A673 (cell line): ENCODE measurements at regions of chr2 and their contacts with region 1.

Region 1: DNA sequence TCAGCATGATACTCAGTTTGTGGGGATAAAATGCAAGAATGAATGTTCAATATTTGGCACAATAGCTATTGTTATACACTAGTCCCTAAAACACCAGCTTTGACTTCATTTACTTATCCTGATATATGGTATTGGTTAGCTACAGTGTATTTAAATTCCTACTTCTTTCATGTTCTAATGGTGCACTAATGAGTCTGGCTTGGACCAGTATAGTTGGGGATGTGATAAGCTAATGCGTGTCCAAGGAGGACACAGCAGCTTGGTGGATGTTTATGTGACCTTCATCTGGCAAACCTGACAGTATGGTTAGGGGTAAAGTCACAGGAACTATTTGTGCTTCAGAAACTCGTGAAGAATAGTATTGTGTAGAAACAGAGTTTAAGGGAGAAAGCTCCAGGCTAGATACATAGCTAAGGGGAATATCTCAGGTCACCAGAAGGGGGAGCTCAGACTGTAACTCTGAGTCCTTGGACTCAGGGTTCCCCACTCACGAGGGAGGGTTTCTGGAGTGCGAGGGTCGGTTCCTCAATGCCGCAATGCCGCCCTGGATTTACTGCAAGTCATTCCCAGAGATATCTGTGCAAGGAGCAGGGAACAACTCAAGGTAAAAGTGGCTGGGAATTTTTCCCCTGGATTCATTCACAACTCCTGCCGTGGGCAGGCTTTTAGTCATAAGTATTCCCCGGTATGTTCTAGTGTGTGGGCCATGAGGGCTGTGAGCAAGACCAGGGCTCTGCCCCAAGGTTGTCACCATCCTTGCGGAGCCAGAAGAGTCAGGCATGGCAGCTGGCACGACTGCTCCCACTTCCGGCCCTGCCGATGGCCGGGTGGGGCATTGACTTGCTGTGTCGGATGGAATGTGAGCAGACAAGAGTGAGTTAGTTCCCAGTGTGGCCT is 14.5 kb downstream of the IL1R2 start:
- DNase-seq: peak; percentile 62
- H3K4me3 ChIP-seq: no peak overlapping the region
- H3K27ac ChIP-seq: no peak overlapping the region
- H3K4me1 ChIP-seq: no peaks in the 10 kb centered on the region
- H3K27me3 ChIP-seq: no peaks in the 10 kb centered on the region
- CTCF ChIP-seq: peak; percentile 74

Region 2: DNA sequence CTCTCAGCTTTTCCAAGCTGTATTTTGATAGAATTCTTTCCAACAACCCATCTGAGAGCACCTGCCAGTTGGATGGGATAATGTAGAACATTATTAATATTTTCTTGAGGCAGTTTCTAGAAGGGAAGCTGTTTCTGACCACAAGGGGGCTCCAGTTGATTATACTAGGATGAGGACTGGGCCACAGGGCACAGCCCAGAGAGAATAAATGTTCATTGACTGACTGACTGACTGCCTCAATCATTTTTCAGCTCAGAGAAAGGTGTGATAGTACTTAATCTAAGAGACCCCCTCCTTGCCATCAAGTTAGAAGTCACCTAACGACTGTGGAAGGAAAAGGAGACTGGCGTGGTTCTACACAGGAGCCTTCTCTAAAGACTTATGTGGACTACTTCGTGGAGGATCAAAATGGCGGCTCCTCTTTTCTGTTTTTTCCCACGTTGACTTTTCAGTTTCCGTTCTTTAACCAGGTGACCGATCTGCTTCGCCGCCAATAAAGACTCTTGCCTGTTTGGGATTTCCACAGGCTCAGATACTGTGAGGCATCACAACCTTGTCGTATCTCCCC is 587.1 kb before region 1 on chr2:
- CTCF ChIA-PET with region 1: no interaction called
- POLR2A ChIA-PET with region 1: no interaction called
- intact Hi-C with region 1: loop called (anchors 10 kb)
- DNase-seq: peak; percentile 73
- H3K4me3 ChIP-seq: no peak overlapping the region
- H3K27ac ChIP-seq: no peak overlapping the region
- H3K4me1 ChIP-seq: no peaks in the 10 kb centered on the region
- H3K27me3 ChIP-seq: no peaks in the 10 kb centered on the region
- CTCF ChIP-seq: peak; percentile 77

Region 3: GRCh38 chr2:101974663-101975062 is 31.6 kb before region 1 on chr2:
- CTCF ChIA-PET with region 1: no interaction called
- POLR2A ChIA-PET with region 1: no interaction called
- intact Hi-C with region 1: no loop called
- DNase-seq: no peak
- H3K4me3 ChIP-seq: no peak overlapping the region
- H3K27ac ChIP-seq: no peak overlapping the region
- H3K4me1 ChIP-seq: no peaks in the 10 kb centered on the region
- H3K27me3 ChIP-seq: no peaks in the 10 kb centered on the region
- CTCF ChIP-seq: no peak

Region 4: GRCh38 chr2:102240640-102241370 is 234.6 kb after region 1 on chr2:
- CTCF ChIA-PET with region 1: interaction called, 28 read pairs
- POLR2A ChIA-PET with region 1: no interaction called
- intact Hi-C with region 1: no loop called
- DNase-seq: peak; percentile 73
- H3K4me3 ChIP-seq: no peak overlapping the region
- H3K27ac ChIP-seq: no peak overlapping the region
- H3K4me1 ChIP-seq: peaks cover 4% of the 10 kb centered on the region
- H3K27me3 ChIP-seq: peaks cover 26% of the 10 kb centered on the region
- CTCF ChIP-seq: peak; percentile 97